ENCODE measurements at regions of chr13 and their contacts with region 1.

Region 1: GRCh38 chr13:77751513-77752456 is 54.3 kb downstream of the SLAIN1 start:
- DNase-seq: peak; percentile 86
- H3K4me3 ChIP-seq: peak overlapping the region; percentile 5
- H3K27ac ChIP-seq: peak overlapping the region; percentile 84
- H3K4me1 ChIP-seq: peaks cover 64% of the 10 kb centered on the region
- H3K27me3 ChIP-seq: no peaks in the 10 kb centered on the region
- CTCF ChIP-seq: peak; percentile 86

Region 2: GRCh38 chr13:77492982-77493381 is 258.8 kb before region 1 on chr13:
- CTCF ChIA-PET with region 1: no interaction called
- POLR2A ChIA-PET with region 1: no interaction called
- intact Hi-C with region 1: loop called (anchors 10 kb)
- DNase-seq: peak; percentile 89
- H3K4me3 ChIP-seq: no peak overlapping the region
- H3K27ac ChIP-seq: no peak overlapping the region
- H3K4me1 ChIP-seq: peaks cover 7% of the 10 kb centered on the region
- H3K27me3 ChIP-seq: peaks cover 80% of the 10 kb centered on the region
- CTCF ChIP-seq: peak; percentile 61